Ascending aorta (tissue), 2 donors: ENCODE measurements at regions of chr17 and their contacts with region 1.

Region 1: DNA sequence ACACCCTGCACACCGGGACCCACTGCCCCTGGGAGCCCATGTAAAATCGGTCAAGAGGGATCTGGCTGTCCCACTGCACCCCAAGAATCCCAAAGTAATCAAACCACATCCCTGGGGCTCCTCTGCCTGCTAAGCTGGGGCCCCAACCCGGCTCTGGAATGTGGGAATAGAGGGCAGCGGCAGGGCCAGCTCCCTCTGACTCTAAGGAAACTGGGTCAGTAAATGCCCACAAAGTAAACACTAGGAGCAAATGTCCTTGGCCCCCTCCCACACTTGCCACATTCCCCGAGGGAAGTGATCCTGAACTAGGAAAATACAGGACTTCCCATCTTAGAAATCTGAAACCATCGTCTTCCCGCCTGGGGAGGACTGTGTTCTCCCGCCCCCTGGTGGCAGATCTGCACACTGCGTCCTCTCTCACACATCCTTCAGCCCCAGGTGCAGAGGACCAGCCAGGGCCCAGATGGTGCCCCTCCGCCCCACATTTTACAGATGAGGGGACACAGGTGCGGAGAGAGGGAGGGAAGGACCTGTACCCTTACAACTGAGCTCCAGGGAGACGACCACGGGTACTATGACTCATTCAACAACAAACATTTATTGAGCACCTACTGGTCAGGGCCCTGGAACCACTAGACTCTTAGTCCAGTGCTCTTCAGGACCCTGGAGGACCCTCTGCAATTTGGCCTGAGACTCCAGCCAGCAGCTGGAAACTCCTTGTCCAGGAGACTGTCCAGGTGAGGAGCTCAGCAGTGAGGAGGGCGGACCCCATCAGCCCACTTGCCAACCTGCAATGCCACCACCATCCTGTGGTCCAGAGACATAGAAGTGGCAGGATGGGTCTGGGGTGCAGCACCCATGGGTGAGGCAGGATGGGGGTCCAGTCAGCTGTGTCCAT is 10.1 kb downstream of the P3H4 start:
- DNase-seq: peak; percentile 34 to 89
- H3K4me3 ChIP-seq: peak overlapping the region in 1 of 2 donors; percentile 17
- H3K27ac ChIP-seq: no peak overlapping the region
- H3K4me1 ChIP-seq: peaks cover 0 to 5% of the 10 kb centered on the region in 2 donors
- H3K27me3 ChIP-seq: no peaks in the 10 kb centered on the region
- CTCF ChIP-seq: peak; percentile 93 to 97 (median 95)

Region 2: DNA sequence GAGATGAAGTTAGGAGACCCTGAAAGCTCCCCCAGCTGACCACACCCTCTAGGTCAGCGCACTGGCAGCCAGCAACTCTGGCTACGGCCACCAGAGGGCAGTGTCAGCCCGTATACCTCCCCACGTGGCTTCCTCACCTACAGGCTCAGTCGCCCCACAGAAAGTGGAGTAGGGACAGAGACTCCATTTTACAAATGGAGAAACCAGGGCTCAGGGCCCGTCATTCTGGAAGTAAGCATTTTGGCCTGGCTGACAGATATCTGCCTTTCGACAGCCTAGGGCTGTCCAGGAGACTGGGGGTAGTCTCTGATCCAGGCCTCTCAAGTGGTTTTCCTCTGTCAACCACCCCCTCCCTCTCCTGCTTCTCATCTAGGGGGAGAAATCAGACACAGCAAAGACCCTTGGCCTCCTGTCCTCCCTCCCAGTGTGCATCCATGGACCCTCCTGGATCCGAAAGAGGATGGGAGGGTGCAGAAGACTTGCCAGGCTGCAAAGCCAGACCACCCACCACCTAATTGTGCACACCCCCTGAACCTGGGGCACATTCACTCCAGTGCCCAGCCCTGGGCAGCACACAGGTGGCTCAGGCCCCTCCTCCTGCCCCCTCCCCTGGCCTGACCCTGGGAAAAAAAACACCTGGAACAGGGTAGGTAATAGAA is 63.4 kb before region 1 on chr17:
- intact Hi-C with region 1: loop called (anchors 1 kb)
- DNase-seq: peak; percentile 19 to 85
- H3K4me3 ChIP-seq: no peak overlapping the region
- H3K27ac ChIP-seq: no peak overlapping the region
- H3K4me1 ChIP-seq: peaks cover 6 to 16% of the 10 kb centered on the region in 2 donors
- H3K27me3 ChIP-seq: peaks cover 16% of the 10 kb centered on the region
- CTCF ChIP-seq: peak; percentile 95 to 98 (median 95)

Region 3: GRCh38 chr17:41750862-41751261 is 50.8 kb before region 1 on chr17:
- intact Hi-C with region 1: no loop called
- DNase-seq: no peak
- H3K4me3 ChIP-seq: no peak overlapping the region
- H3K27ac ChIP-seq: no peak overlapping the region
- H3K4me1 ChIP-seq: no peaks in the 10 kb centered on the region
- H3K27me3 ChIP-seq: no peaks in the 10 kb centered on the region
- CTCF ChIP-seq: no peak

Region 4: GRCh38 chr17:41773190-41773588 is 28.4 kb before region 1 on chr17:
- intact Hi-C with region 1: loop called (anchors 2 kb)
- DNase-seq: peak; percentile 21 to 72
- H3K4me3 ChIP-seq: no peak overlapping the region
- H3K27ac ChIP-seq: peak overlapping the region in 1 of 2 donors; percentile 16
- H3K4me1 ChIP-seq: peaks cover 10 to 19% of the 10 kb centered on the region in 2 donors
- H3K27me3 ChIP-seq: no peaks in the 10 kb centered on the region
- CTCF ChIP-seq: no peak

Region 5: GRCh38 chr17:41870627-41871026 is 69.0 kb after region 1 on chr17:
- intact Hi-C with region 1: no loop called
- DNase-seq: no peak
- H3K4me3 ChIP-seq: no peak overlapping the region
- H3K27ac ChIP-seq: no peak overlapping the region
- H3K4me1 ChIP-seq: no peaks in the 10 kb centered on the region
- H3K27me3 ChIP-seq: no peaks in the 10 kb centered on the region
- CTCF ChIP-seq: no peak